ENCODE measurements at regions of chr3 and their contacts with region 1.

Region 1: DNA sequence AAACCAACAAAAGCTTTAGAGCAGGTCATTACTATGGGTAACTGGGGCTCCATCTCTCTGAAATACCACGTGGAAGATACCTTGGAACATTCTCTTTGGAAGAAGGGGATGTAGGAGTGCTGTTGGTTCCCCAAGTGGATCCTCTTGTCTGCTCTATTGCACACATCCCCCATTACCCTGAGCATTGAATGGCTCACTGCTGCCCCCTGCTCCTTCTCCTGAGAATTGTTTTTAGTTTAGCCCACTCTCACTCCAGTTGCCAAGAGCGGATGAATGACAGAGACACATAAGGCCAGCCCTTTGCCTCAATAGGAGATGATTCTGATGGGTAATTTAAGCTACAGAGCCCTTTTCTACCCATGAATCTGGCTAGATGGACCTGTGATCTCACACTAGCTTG is 135.6 kb upstream of the SUCLG2 start:
- DNase-seq: peak; percentile 52 to 81
- ATAC-seq: peak; percentile 86 to 93 (median 87)
- H3K4me3 ChIP-seq: no peak overlapping the region
- H3K4me3 Mint-ChIP-seq: no peak overlapping the region
- H3K27ac ChIP-seq: no peak overlapping the region
- H3K27ac Mint-ChIP-seq: no peak overlapping the region
- H3K4me1 ChIP-seq: no peaks in the 10 kb centered on the region
- H3K4me1 Mint-ChIP-seq: peaks cover 7 to 8% of the 10 kb centered on the region in 2 donors
- H3K27me3 ChIP-seq: no peaks in the 10 kb centered on the region
- H3K27me3 Mint-ChIP-seq: peaks cover 20 to 52% of the 10 kb centered on the region in 2 donors
- CTCF ChIP-seq: peak; percentile 85

Region 2: DNA sequence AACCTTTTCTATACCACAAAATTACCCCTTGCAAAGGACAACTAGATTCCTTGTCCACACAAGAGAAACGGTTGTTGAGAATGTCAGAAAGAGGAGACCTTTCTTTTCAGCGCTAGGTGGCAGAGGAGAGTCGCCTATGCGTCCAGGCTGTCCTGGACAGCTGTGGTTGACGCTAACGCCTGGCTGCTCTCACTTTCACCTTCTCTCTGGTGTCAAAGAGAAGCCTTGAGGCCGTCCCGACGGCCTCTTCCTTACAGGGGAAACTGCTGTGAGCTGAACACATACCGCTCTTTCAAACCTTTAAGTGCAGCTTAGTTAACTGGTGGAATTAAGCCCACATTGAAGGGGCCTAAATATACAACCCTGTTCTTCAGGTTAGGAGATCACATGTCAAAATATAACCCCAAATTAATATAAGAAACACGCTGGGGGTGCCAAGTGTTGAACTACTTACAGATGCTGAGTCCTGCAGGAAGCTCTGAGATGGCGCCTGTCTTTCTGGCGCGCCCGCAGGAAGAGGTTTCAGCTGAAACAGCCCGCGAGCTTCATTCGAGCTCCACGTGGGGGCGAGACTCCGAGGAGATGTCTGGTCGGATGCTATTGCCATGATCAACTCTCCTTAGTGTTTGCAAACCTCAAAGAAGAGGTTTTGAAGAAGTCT is 818.0 kb before region 1 on chr3:
- intact Hi-C with region 1: loop called (anchors 1 kb)
- DNase-seq: peak; percentile 38 to 79
- ATAC-seq: peak; percentile 87 to 94 (median 91)
- H3K4me3 ChIP-seq: peak overlapping the region; percentile 31
- H3K4me3 Mint-ChIP-seq: peak overlapping the region; percentile 83
- H3K27ac ChIP-seq: peak overlapping the region; percentile 47
- H3K27ac Mint-ChIP-seq: peak overlapping the region in 1 of 2 donors; percentile 81
- H3K4me1 ChIP-seq: peaks cover 9% of the 10 kb centered on the region
- H3K4me1 Mint-ChIP-seq: peaks cover 12 to 13% of the 10 kb centered on the region in 2 donors
- H3K27me3 ChIP-seq: peaks cover 3% of the 10 kb centered on the region
- H3K27me3 Mint-ChIP-seq: peaks cover 6 to 20% of the 10 kb centered on the region in 2 donors
- CTCF ChIP-seq: peak; percentile 88

Region 3: DNA sequence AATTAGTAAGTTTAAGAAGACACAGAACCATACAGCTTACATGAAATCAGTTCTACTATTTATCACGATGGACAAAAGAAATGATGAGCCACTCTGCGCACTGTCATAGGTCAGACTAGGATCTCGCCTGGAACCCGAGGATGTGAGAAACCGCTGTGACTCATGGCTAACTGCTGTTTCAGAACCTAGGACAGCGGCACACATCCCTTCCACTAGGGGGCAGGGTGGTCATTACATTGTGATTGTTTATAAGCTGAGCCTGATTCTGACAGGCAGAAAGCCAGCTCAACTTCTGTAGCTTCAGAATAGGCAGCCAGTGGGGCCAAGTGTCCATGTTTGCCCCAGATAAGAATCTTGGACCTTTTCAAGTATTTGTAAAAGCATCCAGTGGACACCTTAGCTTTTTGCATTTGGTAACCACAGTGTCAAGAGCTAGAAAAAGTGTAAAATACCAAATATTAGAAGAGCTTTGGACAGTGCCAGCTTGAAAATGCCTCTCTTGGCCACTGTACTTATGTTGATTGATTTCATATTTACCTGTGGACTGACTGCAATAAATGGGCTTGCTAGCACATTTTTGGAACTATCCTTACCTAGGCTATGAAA is 676.1 kb before region 1 on chr3:
- intact Hi-C with region 1: loop called (anchors 1 kb)
- DNase-seq: peak; percentile 55 to 85
- ATAC-seq: peak; percentile 88 to 99 (median 97)
- H3K4me3 ChIP-seq: no peak overlapping the region
- H3K4me3 Mint-ChIP-seq: no peak overlapping the region
- H3K27ac ChIP-seq: no peak overlapping the region
- H3K27ac Mint-ChIP-seq: no peak overlapping the region
- H3K4me1 ChIP-seq: no peaks in the 10 kb centered on the region
- H3K4me1 Mint-ChIP-seq: peaks cover 0 to 9% of the 10 kb centered on the region in 2 donors
- H3K27me3 ChIP-seq: no peaks in the 10 kb centered on the region
- H3K27me3 Mint-ChIP-seq: peaks cover 5 to 7% of the 10 kb centered on the region in 2 donors
- CTCF ChIP-seq: peak; percentile 81

Region 4: DNA sequence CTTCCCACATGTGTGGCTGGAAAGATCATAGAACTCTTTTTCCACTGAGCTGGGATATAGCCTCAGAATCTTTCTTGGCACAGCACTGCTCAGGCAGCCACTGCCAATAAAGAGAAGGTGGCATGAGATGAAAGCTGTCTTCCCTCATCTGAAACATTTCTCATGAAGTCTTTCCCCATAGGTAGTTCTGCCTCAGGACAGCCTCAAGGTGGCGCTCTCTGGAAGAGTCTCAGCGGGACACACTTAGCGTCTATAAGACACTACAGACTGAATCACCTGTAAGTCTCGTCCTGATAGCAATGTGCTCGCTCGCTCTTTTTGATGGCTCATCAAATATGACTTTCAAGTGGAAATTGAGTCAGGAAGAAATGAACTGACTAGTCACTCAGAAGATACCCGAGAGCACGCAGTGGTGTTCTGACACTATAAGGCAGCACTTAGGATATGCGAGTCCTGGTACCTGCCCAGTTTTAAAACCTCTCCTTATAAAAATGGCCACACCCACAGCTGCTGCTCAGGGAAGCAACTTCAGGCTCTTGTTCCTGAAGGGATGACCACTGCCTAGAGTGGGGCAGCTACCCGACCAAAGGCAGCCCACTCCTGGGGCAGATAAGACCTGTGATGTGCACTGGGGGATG is 405.2 kb before region 1 on chr3:
- intact Hi-C with region 1: loop called (anchors 1 kb)
- DNase-seq: peak in 1 of 2 donors; percentile 60
- ATAC-seq: peak in 2 of 3 donors; percentile 38 to 50
- H3K4me3 ChIP-seq: no peak overlapping the region
- H3K4me3 Mint-ChIP-seq: no peak overlapping the region
- H3K27ac ChIP-seq: no peak overlapping the region
- H3K27ac Mint-ChIP-seq: no peak overlapping the region
- H3K4me1 ChIP-seq: no peaks in the 10 kb centered on the region
- H3K4me1 Mint-ChIP-seq: peaks cover 14 to 15% of the 10 kb centered on the region in 2 donors
- H3K27me3 ChIP-seq: no peaks in the 10 kb centered on the region
- H3K27me3 Mint-ChIP-seq: no peaks in the 10 kb centered on the region
- CTCF ChIP-seq: peak; percentile 39

Region 5: DNA sequence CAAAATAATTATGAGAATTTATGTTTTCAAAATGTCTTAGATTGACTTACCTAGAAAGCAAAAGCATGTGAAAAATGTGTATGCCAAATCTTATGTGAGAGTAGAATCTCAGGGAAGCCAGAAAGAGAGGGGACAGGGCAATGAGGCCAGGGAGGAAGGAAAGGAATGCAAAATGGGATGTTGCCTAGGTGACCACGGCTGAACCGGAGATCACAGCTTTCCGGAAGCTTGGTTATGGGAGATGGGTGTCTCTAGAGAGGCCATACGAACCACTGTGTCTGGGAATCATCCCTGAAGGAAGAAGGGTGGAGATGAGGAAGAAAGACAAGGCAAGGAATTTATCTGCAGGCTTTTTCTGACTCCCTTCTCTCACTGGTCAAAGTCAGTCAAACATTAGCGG is 211.6 kb before region 1 on chr3:
- intact Hi-C with region 1: no loop called
- DNase-seq: no peak
- ATAC-seq: no peak
- H3K4me3 ChIP-seq: no peak overlapping the region
- H3K4me3 Mint-ChIP-seq: no peak overlapping the region
- H3K27ac ChIP-seq: no peak overlapping the region
- H3K27ac Mint-ChIP-seq: no peak overlapping the region
- H3K4me1 ChIP-seq: no peaks in the 10 kb centered on the region
- H3K4me1 Mint-ChIP-seq: peaks cover 37 to 43% of the 10 kb centered on the region in 2 donors
- H3K27me3 ChIP-seq: no peaks in the 10 kb centered on the region
- H3K27me3 Mint-ChIP-seq: no peaks in the 10 kb centered on the region
- CTCF ChIP-seq: no peak

Region 6: GRCh38 chr3:67593761-67594244 is 196.2 kb before region 1 on chr3:
- intact Hi-C with region 1: loop called (anchors 1 kb)
- DNase-seq: peak; percentile 22 to 40
- ATAC-seq: peak; percentile 79 to 93 (median 80)
- H3K4me3 ChIP-seq: no peak overlapping the region
- H3K4me3 Mint-ChIP-seq: no peak overlapping the region
- H3K27ac ChIP-seq: no peak overlapping the region
- H3K27ac Mint-ChIP-seq: peak overlapping the region in 1 of 2 donors; percentile 10
- H3K4me1 ChIP-seq: peaks cover 6% of the 10 kb centered on the region
- H3K4me1 Mint-ChIP-seq: peaks cover 52 to 65% of the 10 kb centered on the region in 2 donors
- H3K27me3 ChIP-seq: no peaks in the 10 kb centered on the region
- H3K27me3 Mint-ChIP-seq: no peaks in the 10 kb centered on the region
- CTCF ChIP-seq: peak; percentile 41

Measured in natural killer cell (primary cell).